Lower leg skin (tissue), 4 donors: ENCODE measurements at regions of chr7 and their contacts with region 1.

Region 1: DNA sequence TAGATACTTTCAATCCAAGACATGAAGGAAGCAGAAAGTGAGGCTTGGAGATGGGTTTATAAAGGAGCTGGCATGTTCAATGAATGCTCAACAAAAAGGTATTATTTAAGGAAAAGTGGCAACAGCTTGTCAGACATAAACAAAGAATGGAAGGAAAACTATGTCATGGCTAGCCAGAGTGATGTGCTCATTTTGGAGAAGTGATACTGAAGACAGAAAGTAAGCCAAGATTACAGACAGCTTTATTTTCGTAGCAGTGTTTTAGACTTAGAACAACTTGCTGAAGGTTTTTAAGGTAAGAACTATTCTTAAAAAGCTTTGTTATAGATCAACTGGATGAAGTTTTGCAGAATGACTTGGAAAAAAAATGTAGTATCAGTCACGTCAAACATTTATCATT is 160.5 kb upstream of the FERD3L start:
- DNase-seq: no peak
- H3K4me3 ChIP-seq: no peak overlapping the region
- CTCF ChIP-seq: no peak
- POLR2A ChIP-seq: no peak

Region 2: DNA sequence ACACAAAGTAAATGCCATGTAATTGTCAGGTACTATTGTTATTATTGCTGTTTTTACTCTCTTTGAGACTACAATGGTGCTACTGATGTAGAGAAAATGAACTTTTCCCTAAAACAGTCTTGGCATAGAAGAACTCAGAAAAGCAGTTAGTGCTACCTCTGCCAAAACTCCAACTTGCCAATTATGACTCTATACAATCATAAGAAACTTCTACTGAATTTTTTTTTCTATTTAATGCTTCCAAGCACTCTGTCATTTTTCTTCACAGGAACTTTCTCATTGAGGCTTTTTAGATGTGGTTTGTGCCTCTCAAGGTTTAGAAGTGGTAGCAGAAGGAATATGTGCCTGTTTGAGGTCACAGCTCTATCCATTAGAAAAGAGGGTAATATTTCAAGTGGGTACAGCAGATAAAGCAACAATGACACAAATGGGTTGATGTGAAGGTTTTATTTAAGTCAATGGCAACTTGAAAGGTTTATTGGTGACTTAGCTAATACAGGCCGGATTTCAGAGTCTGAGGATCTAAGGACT is 96.5 kb before region 1 on chr7:
- intact Hi-C with region 1: no loop called
- DNase-seq: no peak
- H3K4me3 ChIP-seq: no peak overlapping the region
- CTCF ChIP-seq: no peak
- POLR2A ChIP-seq: no peak

Region 3: DNA sequence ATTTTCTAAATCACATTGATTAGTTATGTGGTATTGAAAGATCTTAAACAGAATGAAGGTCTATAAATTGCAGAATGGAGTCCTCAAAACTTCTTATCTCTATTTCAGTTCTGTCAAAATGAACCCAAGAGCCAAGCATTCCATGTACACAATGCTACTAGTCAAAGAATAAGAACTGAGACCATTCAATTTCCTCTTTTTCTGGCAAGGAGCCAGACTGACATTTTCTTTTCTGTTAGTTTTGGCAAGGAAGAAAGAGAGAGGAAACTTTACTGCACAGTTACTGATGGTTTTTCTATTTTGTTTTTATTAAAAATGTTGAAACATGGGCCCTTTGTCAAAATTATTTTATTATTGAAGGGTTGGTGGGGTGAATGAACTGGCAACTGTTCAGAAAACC is 21.3 kb after region 1 on chr7:
- intact Hi-C with region 1: loop called (anchors 1 kb)
- DNase-seq: no peak
- H3K4me3 ChIP-seq: no peak overlapping the region
- CTCF ChIP-seq: no peak
- POLR2A ChIP-seq: no peak